CD8-positive, alpha-beta T cell (primary cell): ENCODE measurements at regions of chr12 and their contacts with region 1.

Region 1: DNA sequence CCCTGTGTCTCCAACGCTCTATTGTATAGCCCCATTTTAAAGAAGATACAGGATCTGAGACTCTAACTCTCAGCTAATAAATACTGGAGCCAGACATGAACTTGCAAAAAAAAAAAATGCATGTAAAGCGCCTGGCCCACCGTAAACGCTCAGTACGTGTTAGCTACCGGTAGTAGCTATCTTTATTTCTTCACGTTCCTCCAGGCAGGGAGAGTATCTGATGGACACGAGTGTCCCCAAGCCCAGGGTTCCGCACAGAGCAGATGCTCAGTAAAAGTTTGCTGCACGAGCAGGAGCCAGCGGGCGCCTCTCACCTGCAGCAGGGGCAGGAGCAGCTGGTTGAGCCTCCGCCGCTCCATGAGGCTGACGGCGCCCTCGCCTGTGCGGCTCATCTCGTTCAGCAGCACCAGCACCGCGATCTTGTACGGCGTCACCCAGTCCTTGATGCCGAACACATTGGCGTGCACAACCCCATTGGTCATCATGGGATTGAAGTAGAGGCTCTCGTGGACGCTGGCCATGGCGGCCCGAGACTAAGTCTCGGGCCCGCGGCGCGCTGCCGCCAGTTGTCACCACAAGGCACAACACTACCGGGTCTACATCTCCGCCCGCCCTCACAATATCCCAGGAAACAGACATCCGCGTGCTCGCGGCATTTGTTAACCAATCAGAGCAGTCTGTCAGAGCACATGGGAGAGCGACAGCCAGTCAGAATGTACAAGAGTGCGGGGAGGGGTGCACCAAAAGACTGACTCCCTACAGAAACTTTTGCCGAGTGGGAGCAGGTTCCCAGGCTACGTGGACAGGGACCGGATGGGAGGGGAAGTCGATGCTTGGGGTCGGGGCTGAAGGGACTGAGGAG is at the start of gene ANAPC5:
- DNase-seq: peak; percentile 78 to 97 (median 89)
- ATAC-seq: peak; percentile 98
- H3K4me3 ChIP-seq: peak within 1 kb of the TSS; percentile 79 to 93
- H3K4me3 Mint-ChIP-seq: peak within 1 kb of the TSS; percentile 97
- H3K27ac ChIP-seq: peak within 1 kb of the TSS; percentile 74 to 75
- H3K27ac Mint-ChIP-seq: peak within 1 kb of the TSS; percentile 98
- H3K4me1 ChIP-seq: peaks cover 15% of the 10 kb centered on the region
- H3K4me1 Mint-ChIP-seq: peaks cover 34% of the 10 kb centered on the region
- H3K27me3 ChIP-seq: no peaks in the 10 kb centered on the region
- H3K27me3 Mint-ChIP-seq: no peaks in the 10 kb centered on the region
- CTCF ChIP-seq: no peak
- total RNA-seq, gene ANAPC5: 96.5 to 106 TPM

Region 2: DNA sequence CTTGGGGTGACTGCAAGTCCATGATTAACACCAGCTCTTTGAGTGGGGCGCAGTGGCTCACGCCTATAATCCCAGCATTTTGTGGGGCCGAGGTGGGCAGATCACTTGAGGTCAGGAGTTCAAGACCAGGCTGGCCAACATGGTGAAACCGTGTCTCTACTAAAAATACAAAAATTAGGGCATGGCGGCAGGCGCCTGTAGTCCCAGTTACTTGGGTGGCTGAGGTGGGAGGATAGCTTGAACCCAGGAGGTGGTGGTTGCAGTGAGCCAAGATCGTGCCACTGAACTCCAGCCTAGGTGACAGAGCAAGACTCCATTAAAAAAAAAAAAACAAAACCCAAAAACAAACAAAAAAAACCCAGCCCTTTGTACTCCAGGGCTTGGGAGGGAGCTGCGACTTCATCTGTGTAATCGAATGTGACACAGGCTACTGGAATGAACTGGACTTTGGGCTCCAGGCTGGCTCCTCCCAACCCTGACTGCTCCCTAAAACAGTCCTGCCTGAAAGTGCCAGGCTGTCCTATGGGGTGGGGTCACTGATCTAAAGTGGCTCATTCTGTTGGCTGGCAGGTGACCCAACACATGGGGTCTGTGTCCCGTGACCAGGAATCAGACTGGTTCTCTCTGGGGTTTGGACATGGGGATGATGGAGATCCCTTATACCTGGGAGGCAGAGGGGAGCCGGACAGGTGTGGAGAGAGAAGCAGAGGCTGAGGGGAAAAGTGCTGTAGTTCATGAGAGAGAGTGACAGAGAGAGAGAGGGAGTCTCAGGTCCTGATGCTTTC is 326.4 kb before region 1 on chr12:
- CTCF ChIA-PET with region 1: no interaction called
- POLR2A ChIA-PET with region 1: no interaction called
- intact Hi-C with region 1: no loop called
- DNase-seq: no peak
- ATAC-seq: no peak
- H3K4me3 ChIP-seq: no peak overlapping the region
- H3K4me3 Mint-ChIP-seq: no peak overlapping the region
- H3K27ac ChIP-seq: no peak overlapping the region
- H3K27ac Mint-ChIP-seq: no peak overlapping the region
- H3K4me1 ChIP-seq: no peaks in the 10 kb centered on the region
- H3K4me1 Mint-ChIP-seq: peaks cover 3% of the 10 kb centered on the region
- H3K27me3 ChIP-seq: no peaks in the 10 kb centered on the region
- H3K27me3 Mint-ChIP-seq: no peaks in the 10 kb centered on the region
- CTCF ChIP-seq: no peak

Region 3: DNA sequence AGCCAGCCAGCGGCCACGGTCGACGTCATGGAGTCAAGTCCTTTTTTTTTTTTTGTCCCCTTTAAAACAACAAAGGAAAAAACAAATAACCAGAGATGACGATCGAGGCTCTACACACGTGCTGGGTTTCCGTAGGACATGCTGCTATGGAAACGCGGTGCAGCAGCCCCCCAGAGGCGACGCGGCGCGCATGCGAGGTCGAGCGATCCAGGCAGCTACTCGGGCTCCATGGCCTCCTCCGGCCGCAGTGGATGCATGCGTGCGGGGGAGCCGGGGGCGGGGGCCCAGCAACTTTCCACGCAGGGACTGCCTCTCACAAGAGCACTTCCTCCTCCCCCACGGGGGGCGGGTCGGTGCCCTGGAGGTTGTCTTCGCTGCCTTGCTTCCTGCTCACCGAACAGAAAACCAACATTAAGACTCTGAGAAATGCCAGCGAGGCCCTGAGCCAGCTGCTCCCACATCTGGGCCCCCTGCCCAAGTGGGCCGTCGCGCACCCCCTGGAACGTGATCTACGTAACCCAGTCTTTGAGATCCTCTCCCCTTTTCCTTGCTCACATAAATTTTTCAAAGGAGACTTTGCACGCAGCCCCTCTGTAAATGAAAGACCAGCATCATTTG is 111.5 kb before region 1 on chr12:
- CTCF ChIA-PET with region 1: no interaction called
- POLR2A ChIA-PET with region 1: no interaction called
- intact Hi-C with region 1: loop called in 1 of 2 experiments (anchors 1 kb)
- DNase-seq: peak; percentile 82 to 100 (median 94)
- ATAC-seq: peak; percentile 95
- H3K4me3 ChIP-seq: peak overlapping the region; percentile 40 to 42
- H3K4me3 Mint-ChIP-seq: peak overlapping the region; percentile 84
- H3K27ac ChIP-seq: peak overlapping the region; percentile 85 to 88
- H3K27ac Mint-ChIP-seq: peak overlapping the region; percentile 96
- H3K4me1 ChIP-seq: peaks cover 42% of the 10 kb centered on the region
- H3K4me1 Mint-ChIP-seq: peaks cover 47% of the 10 kb centered on the region
- H3K27me3 ChIP-seq: no peaks in the 10 kb centered on the region
- H3K27me3 Mint-ChIP-seq: no peaks in the 10 kb centered on the region
- CTCF ChIP-seq: no peak

Region 4: GRCh38 chr12:121334513-121335343 is 17.3 kb before region 1 on chr12:
- CTCF ChIA-PET with region 1: interaction called, 13 read pairs
- POLR2A ChIA-PET with region 1: interaction called, 3 read pairs
- intact Hi-C with region 1: no loop called
- DNase-seq: peak in 3 of 9 experiments; percentile 14 to 74 (median 60)
- ATAC-seq: peak; percentile 93
- H3K4me3 ChIP-seq: no peak overlapping the region
- H3K4me3 Mint-ChIP-seq: no peak overlapping the region
- H3K27ac ChIP-seq: no peak overlapping the region
- H3K27ac Mint-ChIP-seq: no peak overlapping the region
- H3K4me1 ChIP-seq: no peaks in the 10 kb centered on the region
- H3K4me1 Mint-ChIP-seq: peaks cover 3% of the 10 kb centered on the region
- H3K27me3 ChIP-seq: no peaks in the 10 kb centered on the region
- H3K27me3 Mint-ChIP-seq: no peaks in the 10 kb centered on the region
- CTCF ChIP-seq: peak; percentile 92

Region 5: DNA sequence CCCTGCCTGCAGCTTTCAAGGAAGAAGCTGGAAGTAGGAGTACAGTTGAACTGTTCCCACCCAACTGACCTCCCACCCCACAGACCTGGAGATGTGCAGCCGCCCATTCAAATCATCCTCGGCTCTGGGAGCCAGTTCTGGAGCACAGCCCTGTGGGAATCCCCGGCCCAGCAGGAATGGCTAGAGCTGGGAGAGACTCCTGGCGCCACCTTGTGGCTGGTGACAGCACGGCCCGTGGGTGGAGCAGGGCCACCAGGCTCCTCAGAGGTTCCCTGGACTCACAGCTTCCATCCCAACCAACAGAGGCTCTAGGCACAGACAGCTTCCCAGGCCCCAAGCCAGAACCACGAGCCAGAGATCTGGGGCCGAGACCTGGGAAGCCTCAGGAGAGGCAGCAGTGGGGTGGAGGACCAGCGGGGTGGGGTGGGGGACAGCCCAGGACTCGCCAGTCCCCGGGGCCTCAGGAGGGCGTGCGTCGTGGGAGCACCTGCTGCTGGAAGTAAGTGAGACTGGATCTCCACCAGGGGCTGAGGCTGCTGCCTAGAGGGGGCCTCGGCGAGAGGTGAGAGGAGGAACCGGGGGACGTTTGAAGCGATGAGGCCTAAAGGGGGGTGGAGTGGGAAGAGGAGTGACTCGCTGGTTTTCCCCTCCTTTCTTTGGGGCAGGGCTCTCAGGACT is 91.3 kb after region 1 on chr12:
- CTCF ChIA-PET with region 1: no interaction called
- POLR2A ChIA-PET with region 1: interaction called, 4 read pairs
- intact Hi-C with region 1: loop called (anchors 1 to 5 kb)
- DNase-seq: peak; percentile 43 to 74 (median 67)
- ATAC-seq: peak; percentile 80
- H3K4me3 ChIP-seq: no peak overlapping the region
- H3K4me3 Mint-ChIP-seq: no peak overlapping the region
- H3K27ac ChIP-seq: no peak overlapping the region
- H3K27ac Mint-ChIP-seq: peak overlapping the region; percentile 79
- H3K4me1 ChIP-seq: no peaks in the 10 kb centered on the region
- H3K4me1 Mint-ChIP-seq: peaks cover 5% of the 10 kb centered on the region
- H3K27me3 ChIP-seq: no peaks in the 10 kb centered on the region
- H3K27me3 Mint-ChIP-seq: no peaks in the 10 kb centered on the region
- CTCF ChIP-seq: peak; percentile 76

Region 6: GRCh38 chr12:121712461-121713256 is 360.6 kb after region 1 on chr12 and contains the start of gene TMEM120B:
- CTCF ChIA-PET with region 1: no interaction called
- POLR2A ChIA-PET with region 1: no interaction called
- intact Hi-C with region 1: loop called in 1 of 2 experiments (anchors 10 kb)
- DNase-seq: peak; percentile 70 to 92 (median 85)
- ATAC-seq: peak; percentile 92
- H3K4me3 ChIP-seq: peak within 1 kb of the TSS; percentile 96 to 100
- H3K4me3 Mint-ChIP-seq: peak within 1 kb of the TSS; percentile 92
- H3K27ac ChIP-seq: peak within 1 kb of the TSS; percentile 73 to 89
- H3K27ac Mint-ChIP-seq: peak within 1 kb of the TSS; percentile 91
- H3K4me1 ChIP-seq: peaks cover 17% of the 10 kb centered on the region
- H3K4me1 Mint-ChIP-seq: peaks cover 31% of the 10 kb centered on the region
- H3K27me3 ChIP-seq: no peaks in the 10 kb centered on the region
- H3K27me3 Mint-ChIP-seq: no peaks in the 10 kb centered on the region
- CTCF ChIP-seq: no peak
- total RNA-seq, gene TMEM120B: 6.4 to 7.3 TPM